ENCODE measurements at regions of chr2 and their contacts with region 1.

Region 1: DNA sequence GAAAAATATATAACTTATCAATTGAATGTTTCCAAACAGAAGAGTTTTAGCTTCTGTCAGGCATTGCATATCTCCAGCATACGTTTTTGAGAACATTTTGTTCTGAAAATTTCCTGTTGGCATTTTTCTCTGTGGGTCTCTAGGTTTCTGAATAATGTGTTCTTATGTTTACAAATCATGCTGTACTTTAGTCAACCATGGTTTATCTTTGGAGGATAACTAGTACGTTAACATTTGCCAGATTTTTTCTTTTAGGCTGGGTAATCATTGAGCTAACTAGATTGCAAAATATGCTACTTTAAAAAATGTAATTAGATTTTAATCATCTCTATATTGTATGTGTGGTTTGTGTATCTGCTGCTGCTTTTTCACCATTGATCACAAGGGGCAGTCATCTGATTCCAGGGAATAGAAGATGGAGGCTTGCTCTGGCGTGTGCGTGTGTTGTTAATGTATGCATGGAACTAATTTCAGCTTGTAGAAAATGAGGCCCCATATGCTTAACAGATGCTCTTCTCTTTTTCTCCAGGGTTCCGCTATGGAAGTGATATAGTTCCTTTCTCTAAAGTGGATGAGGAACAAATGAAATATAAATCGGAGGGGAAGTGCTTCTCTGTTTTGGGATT is 21.3 kb downstream of the XRCC5 start:
- DNase-seq: no peak
- H3K4me3 ChIP-seq: no peak overlapping the region
- H3K27ac ChIP-seq: no peak overlapping the region
- H3K4me1 ChIP-seq: no peaks in the 10 kb centered on the region
- H3K27me3 ChIP-seq: no peaks in the 10 kb centered on the region

Region 2: DNA sequence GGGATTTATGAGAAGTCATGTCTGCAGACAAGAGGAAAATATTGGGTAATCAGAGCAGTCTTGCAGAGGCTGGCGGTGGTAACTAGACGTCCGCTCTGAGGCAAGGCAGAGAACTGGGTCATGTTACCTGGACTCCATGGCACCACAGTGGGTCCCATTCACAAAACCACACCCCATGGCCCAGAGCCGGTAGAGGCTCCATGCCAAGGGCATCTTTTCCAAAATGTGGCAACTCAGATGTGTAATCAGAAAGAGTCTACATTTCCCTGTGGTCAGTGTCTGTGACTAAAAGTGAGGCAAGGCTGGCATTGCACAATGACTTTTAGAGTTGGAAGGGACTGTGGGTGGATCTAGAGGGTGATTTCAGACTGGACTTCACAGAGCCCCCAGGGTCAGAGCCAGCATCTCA is 230.3 kb before region 1 on chr2:
- CTCF ChIA-PET with region 1: no interaction called
- POLR2A ChIA-PET with region 1: no interaction called
- DNase-seq: peak in 2 of 3 donors; percentile 32 to 43
- H3K4me3 ChIP-seq: peak overlapping the region in 2 of 7 experiments; percentile 20 to 21
- H3K27ac ChIP-seq: no peak overlapping the region
- H3K4me1 ChIP-seq: peaks cover 7 to 26% (median 20%) of the 10 kb centered on the region in 4 experiments
- H3K27me3 ChIP-seq: no peaks in the 10 kb centered on the region

Region 3: DNA sequence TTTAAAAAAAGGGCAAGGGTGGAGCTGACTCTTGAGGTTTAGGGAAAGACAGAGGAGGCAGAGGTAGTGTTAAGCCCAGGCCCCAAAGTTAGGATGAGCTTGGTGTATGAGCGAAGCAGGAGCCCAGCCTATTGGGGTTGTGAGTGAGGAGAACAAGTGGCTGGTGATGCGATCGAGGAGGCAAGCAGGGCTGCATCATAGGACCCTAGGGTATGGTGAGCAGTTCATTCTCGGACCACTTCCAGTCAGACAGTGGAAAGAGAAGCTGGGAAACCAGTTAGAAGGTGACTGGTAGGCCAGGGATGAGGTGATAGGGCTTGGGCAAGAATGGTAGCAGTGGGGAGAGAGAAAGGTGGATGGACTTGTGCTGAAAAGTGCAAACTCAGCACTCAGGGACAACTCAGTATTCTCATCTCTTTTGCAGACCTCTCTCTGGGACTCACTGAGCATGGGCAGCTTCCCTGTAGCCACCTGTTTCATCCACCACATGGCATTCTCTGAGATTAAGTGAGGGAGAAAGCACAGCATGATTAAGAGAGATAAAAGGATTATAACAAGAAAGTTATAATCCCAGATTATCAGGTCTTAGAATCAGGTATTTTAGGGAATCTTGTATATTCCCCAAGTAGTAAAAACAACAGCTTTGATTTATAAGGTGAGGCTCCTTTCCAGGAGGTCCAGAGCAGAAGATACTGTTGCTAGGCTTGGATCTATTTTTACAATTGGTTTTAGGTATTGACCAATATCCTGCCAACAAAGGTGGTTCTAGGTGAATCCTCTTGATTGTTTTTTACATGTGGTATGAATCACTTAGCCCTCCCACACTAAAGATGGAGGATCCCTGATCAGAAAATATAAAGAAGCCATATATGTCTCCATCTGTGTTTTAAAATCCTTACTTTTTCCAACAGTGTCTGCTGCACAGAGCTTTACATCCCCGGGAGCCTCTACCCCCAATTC is 17.0 kb after region 1 on chr2:
- CTCF ChIA-PET with region 1: interaction called, 14 read pairs
- POLR2A ChIA-PET with region 1: no interaction called
- DNase-seq: no peak
- H3K4me3 ChIP-seq: no peak overlapping the region
- H3K27ac ChIP-seq: no peak overlapping the region
- H3K4me1 ChIP-seq: no peaks in the 10 kb centered on the region
- H3K27me3 ChIP-seq: no peaks in the 10 kb centered on the region

Measured in common myeloid progenitor, CD34-positive (primary cell).